Left ventricle myocardium inferior (tissue), 1 donor: ENCODE measurements at regions of chr1 and their contacts with region 1.

Region 1: DNA sequence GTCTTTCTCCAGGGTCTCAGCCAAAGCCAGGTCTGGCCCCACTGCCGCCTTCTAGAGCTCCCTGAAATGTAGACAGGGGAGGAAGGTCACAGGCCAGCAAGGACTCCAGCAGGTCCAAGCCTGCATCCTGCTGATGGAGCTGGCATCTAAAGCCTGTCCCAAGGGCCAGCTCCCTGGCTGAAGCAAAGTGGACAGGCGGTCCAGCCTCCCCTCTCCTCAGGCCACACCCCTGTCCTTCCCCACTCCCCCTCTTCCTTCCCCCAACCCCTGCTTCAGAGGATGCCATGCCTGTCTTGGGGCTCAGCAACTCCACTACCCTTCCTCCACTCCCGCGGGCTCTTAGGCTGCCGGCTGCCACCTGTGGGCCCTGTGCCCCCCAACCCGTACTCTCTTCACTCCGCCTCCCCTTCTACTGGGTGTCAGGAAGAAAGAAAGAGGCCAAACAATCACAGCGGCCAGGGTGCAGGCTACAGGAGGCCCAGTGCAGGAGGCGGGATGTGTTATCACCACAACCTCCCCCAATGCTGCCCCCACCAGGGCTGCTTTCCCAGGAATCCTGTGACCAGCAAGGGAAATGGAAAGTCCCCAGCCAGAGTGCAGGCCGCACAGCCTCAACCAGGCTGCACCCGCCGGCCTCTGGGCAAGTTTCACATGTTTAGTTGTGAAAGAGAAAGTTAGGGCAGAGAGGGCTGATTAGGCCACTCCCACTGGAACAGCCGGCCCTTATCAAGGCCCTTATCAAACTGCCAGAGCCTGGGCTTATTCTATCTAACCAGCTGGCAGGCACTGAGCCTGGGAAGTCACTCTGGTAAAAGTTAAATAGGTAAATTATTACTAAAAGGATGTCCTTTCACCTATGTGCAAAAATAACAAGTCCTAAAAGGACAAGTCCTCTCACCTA is 34.1 kb downstream of the ACOT7 start:
- DNase-seq: peak; percentile 53
- H3K4me3 ChIP-seq: peak overlapping the region; percentile 33
- H3K27ac ChIP-seq: peak overlapping the region; percentile 83
- H3K4me1 ChIP-seq: peaks cover 40% of the 10 kb centered on the region
- H3K27me3 ChIP-seq: no peaks in the 10 kb centered on the region
- CTCF ChIP-seq: no peak

Region 2: GRCh38 chr1:6409053-6409452 is 49.6 kb after region 1 on chr1:
- intact Hi-C with region 1: loop called (anchors 5 kb)
- DNase-seq: no peak
- H3K4me3 ChIP-seq: no peak overlapping the region
- H3K27ac ChIP-seq: no peak overlapping the region
- H3K4me1 ChIP-seq: no peaks in the 10 kb centered on the region
- H3K27me3 ChIP-seq: peaks cover 70% of the 10 kb centered on the region
- CTCF ChIP-seq: no peak